CD8-positive, alpha-beta T cell (primary cell): ENCODE measurements at regions of chr5 and their contacts with region 1.

Region 1: GRCh38 chr5:91419571-91420537 is 36.7 kb upstream of the ARRDC3 start:
- DNase-seq: peak; percentile 47 to 82 (median 77)
- ATAC-seq: no peak
- H3K4me3 ChIP-seq: no peak overlapping the region
- H3K4me3 Mint-ChIP-seq: no peak overlapping the region
- H3K27ac ChIP-seq: no peak overlapping the region
- H3K27ac Mint-ChIP-seq: no peak overlapping the region
- H3K4me1 ChIP-seq: peaks cover 9% of the 10 kb centered on the region
- H3K4me1 Mint-ChIP-seq: peaks cover 22% of the 10 kb centered on the region
- H3K27me3 ChIP-seq: no peaks in the 10 kb centered on the region
- H3K27me3 Mint-ChIP-seq: no peaks in the 10 kb centered on the region
- CTCF ChIP-seq: peak; percentile 92

Region 2: GRCh38 chr5:90598293-90598692 is 821.6 kb before region 1 on chr5:
- CTCF ChIA-PET with region 1: no interaction called
- POLR2A ChIA-PET with region 1: no interaction called
- intact Hi-C with region 1: no loop called
- DNase-seq: no peak
- ATAC-seq: no peak
- H3K4me3 ChIP-seq: no peak overlapping the region
- H3K4me3 Mint-ChIP-seq: no peak overlapping the region
- H3K27ac ChIP-seq: no peak overlapping the region
- H3K27ac Mint-ChIP-seq: no peak overlapping the region
- H3K4me1 ChIP-seq: no peaks in the 10 kb centered on the region
- H3K4me1 Mint-ChIP-seq: no peaks in the 10 kb centered on the region
- H3K27me3 ChIP-seq: no peaks in the 10 kb centered on the region
- H3K27me3 Mint-ChIP-seq: peaks cover 5% of the 10 kb centered on the region
- CTCF ChIP-seq: no peak

Region 3: DNA sequence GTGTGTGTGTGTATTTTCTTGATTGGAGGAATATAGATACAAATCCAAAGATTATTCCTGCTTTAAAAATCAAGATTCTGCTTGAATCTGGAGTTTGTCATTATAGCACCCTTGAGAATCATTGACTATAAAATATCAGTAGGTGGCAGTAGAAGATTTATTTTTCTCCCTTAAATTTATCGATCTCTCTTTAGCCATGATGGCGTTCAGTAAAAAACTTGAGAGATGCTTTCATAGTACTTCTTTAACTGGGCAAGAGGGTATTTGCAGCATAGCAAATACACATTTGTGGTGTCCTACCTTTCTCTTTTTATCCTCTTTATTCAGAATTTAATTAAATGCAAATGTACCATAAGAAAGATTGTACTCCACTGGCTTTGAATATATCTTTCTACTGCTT is 553.5 kb before region 1 on chr5:
- CTCF ChIA-PET with region 1: interaction called, 68 read pairs
- POLR2A ChIA-PET with region 1: no interaction called
- intact Hi-C with region 1: loop called (anchors 1 kb)
- DNase-seq: peak in 2 of 9 experiments; percentile 39 to 52
- ATAC-seq: no peak
- H3K4me3 ChIP-seq: no peak overlapping the region
- H3K4me3 Mint-ChIP-seq: no peak overlapping the region
- H3K27ac ChIP-seq: no peak overlapping the region
- H3K27ac Mint-ChIP-seq: no peak overlapping the region
- H3K4me1 ChIP-seq: peaks cover 4% of the 10 kb centered on the region
- H3K4me1 Mint-ChIP-seq: peaks cover 11% of the 10 kb centered on the region
- H3K27me3 ChIP-seq: no peaks in the 10 kb centered on the region
- H3K27me3 Mint-ChIP-seq: peaks cover 2% of the 10 kb centered on the region
- CTCF ChIP-seq: peak; percentile 49

Region 4: DNA sequence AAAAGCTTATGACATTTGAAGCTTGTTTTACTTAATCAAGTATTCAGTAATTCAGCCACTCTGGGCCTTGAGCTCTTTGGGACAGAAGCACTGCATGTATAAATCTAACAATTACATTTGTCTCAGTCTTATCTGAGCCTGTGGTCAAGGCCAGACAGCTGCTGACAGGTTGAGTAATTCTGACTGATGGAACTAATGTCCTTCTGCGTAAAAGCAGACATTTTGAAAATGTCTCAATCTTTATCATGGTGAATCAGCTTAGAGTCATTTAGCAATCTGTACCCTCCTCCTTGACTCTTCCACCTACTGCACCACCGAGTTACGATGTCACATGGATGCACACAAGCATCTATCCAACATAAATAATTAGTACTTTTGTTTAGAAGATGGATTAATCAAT is 436.7 kb before region 1 on chr5:
- CTCF ChIA-PET with region 1: no interaction called
- POLR2A ChIA-PET with region 1: no interaction called
- intact Hi-C with region 1: no loop called
- DNase-seq: no peak
- ATAC-seq: no peak
- H3K4me3 ChIP-seq: no peak overlapping the region
- H3K4me3 Mint-ChIP-seq: no peak overlapping the region
- H3K27ac ChIP-seq: no peak overlapping the region
- H3K27ac Mint-ChIP-seq: no peak overlapping the region
- H3K4me1 ChIP-seq: no peaks in the 10 kb centered on the region
- H3K4me1 Mint-ChIP-seq: no peaks in the 10 kb centered on the region
- H3K27me3 ChIP-seq: no peaks in the 10 kb centered on the region
- H3K27me3 Mint-ChIP-seq: no peaks in the 10 kb centered on the region
- CTCF ChIP-seq: no peak

Region 5: GRCh38 chr5:91101600-91102379 is 318.1 kb before region 1 on chr5:
- CTCF ChIA-PET with region 1: interaction called, 3 read pairs
- POLR2A ChIA-PET with region 1: no interaction called
- intact Hi-C with region 1: loop called (anchors 1 kb)
- DNase-seq: peak in 8 of 9 experiments; percentile 14 to 71 (median 46)
- ATAC-seq: peak; percentile 84
- H3K4me3 ChIP-seq: no peak overlapping the region
- H3K4me3 Mint-ChIP-seq: no peak overlapping the region
- H3K27ac ChIP-seq: no peak overlapping the region
- H3K27ac Mint-ChIP-seq: no peak overlapping the region
- H3K4me1 ChIP-seq: no peaks in the 10 kb centered on the region
- H3K4me1 Mint-ChIP-seq: no peaks in the 10 kb centered on the region
- H3K27me3 ChIP-seq: no peaks in the 10 kb centered on the region
- H3K27me3 Mint-ChIP-seq: no peaks in the 10 kb centered on the region
- CTCF ChIP-seq: no peak

Region 6: GRCh38 chr5:91225848-91226686 is 193.8 kb before region 1 on chr5:
- CTCF ChIA-PET with region 1: interaction called, 50 read pairs
- POLR2A ChIA-PET with region 1: no interaction called
- intact Hi-C with region 1: loop called (anchors 1 kb)
- DNase-seq: peak; percentile 13 to 77 (median 61)
- ATAC-seq: peak; percentile 63
- H3K4me3 ChIP-seq: no peak overlapping the region
- H3K4me3 Mint-ChIP-seq: no peak overlapping the region
- H3K27ac ChIP-seq: no peak overlapping the region
- H3K27ac Mint-ChIP-seq: no peak overlapping the region
- H3K4me1 ChIP-seq: no peaks in the 10 kb centered on the region
- H3K4me1 Mint-ChIP-seq: no peaks in the 10 kb centered on the region
- H3K27me3 ChIP-seq: no peaks in the 10 kb centered on the region
- H3K27me3 Mint-ChIP-seq: no peaks in the 10 kb centered on the region
- CTCF ChIP-seq: peak; percentile 53

Region 7: GRCh38 chr5:91408710-91409109 is 11.1 kb before region 1 on chr5:
- CTCF ChIA-PET with region 1: interaction called, 31 read pairs
- POLR2A ChIA-PET with region 1: interaction called, 5 read pairs
- intact Hi-C with region 1: no loop called
- DNase-seq: no peak
- ATAC-seq: no peak
- H3K4me3 ChIP-seq: no peak overlapping the region
- H3K4me3 Mint-ChIP-seq: no peak overlapping the region
- H3K27ac ChIP-seq: no peak overlapping the region
- H3K27ac Mint-ChIP-seq: no peak overlapping the region
- H3K4me1 ChIP-seq: no peaks in the 10 kb centered on the region
- H3K4me1 Mint-ChIP-seq: no peaks in the 10 kb centered on the region
- H3K27me3 ChIP-seq: no peaks in the 10 kb centered on the region
- H3K27me3 Mint-ChIP-seq: no peaks in the 10 kb centered on the region
- CTCF ChIP-seq: no peak